Activated CD4-positive, alpha-beta memory T cell treated with anti-CD3 and anti-CD28 coated beads for 36 hours (primary cell): ENCODE measurements at regions of chr16 and their contacts with region 1.

Region 1: DNA sequence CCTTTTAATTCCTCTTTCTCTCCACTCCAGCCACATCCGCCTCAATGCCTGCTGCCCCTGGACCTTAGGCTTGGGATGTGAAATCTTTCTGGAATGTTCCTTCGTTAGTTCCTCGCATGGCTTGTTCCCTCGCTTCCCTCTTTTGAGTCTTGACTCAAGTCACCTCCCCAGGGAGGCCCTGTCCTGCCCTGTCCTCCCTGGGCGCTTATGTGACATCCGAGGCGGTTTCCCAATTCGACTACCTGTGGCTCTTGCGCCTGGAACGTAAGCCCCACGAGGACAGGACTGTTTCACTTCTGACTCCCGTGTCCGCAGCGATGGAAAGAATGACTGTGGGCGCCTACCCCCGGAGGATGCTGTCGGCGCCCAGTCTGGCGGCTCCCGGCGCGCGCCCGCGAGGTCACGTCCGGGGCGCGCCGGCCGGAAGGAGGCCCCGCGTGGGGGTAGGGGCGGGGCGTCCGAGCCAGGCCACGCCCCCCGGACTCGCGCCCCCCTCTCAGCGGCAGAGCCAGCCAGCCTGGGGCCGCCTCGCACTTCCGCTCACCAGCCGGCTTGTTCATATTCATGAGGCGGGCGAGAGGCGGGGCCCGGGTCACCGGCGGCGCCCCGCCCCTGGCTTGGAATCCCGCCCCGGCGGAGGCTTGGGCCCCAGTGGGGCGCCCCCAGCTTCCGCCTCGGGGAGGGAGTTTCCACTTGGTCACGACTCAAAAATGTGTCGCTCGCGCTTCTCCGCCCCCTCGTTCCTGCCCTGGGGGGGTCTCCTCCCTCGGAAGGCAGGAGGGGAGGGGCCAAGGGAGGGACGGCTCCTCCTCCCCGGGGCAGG is 8.4 kb upstream of the GLIS2 start:
- DNase-seq: peak; percentile 97
- H3K4me3 Mint-ChIP-seq: peak overlapping the region; percentile 90
- H3K27ac Mint-ChIP-seq: peak overlapping the region; percentile 90
- H3K4me1 Mint-ChIP-seq: peaks cover 33% of the 10 kb centered on the region
- H3K27me3 Mint-ChIP-seq: no peaks in the 10 kb centered on the region

Region 2: GRCh38 chr16:4183237-4184036 is 124.0 kb before region 1 on chr16:
- CTCF ChIA-PET with region 1: no interaction called
- POLR2A ChIA-PET with region 1: no interaction called
- intact Hi-C with region 1: loop called (anchors 2 kb)
- DNase-seq: peak; percentile 95
- H3K4me3 Mint-ChIP-seq: peak overlapping the region; percentile 76
- H3K27ac Mint-ChIP-seq: peak overlapping the region; percentile 69
- H3K4me1 Mint-ChIP-seq: peaks cover 3% of the 10 kb centered on the region
- H3K27me3 Mint-ChIP-seq: peaks cover 4% of the 10 kb centered on the region

Region 3: DNA sequence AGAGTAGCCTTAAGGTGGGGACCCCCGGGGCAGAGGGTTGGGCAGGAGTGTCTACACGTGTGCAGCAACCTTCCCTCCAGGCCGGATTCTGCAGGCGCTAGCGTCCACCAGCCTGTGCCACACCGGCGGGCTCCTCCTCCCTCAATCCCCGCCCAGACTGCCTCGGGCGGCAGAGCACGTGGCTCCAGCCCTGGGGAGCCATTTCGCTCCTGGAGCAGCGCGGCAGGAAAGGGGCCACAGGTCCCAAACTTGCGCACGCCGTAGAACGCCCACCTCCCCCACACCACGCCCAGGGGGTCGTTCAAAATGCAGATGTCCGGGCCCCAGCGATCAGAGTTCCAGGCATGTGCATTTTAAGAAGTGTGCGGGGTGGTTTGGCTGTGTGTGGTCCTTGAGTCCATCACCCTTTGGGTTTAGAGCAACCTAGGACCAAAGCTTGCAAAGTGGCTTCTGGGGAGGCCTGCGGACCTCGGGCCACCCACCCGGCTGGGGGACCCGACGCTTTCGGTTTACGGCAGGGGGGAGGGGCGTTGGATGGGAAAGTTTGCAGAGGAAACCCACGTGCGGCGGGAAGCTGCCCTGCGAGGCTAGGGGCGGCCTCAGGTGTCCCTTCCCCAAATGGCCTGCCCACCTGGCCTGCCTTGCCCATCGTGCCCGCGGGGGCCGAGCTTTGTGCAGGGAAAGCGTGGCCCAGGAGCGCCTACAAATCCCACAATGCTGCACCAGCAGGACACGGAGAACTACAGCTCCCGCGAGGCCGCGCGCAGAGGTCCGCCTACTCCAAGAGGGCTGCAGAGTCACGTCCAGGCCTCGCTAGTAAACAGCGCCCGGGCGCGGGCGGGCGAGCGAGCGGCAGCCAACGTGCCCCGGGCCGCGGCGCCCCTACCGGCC is 36.0 kb before region 1 on chr16:
- CTCF ChIA-PET with region 1: interaction called, 6 read pairs
- POLR2A ChIA-PET with region 1: interaction called, 3 read pairs
- intact Hi-C with region 1: loop called (anchors 1 kb)
- DNase-seq: peak; percentile 94
- H3K4me3 Mint-ChIP-seq: peak overlapping the region; percentile 86
- H3K27ac Mint-ChIP-seq: peak overlapping the region; percentile 93
- H3K4me1 Mint-ChIP-seq: peaks cover 14% of the 10 kb centered on the region
- H3K27me3 Mint-ChIP-seq: no peaks in the 10 kb centered on the region

Region 4: GRCh38 chr16:4350787-4351659 is 43.6 kb after region 1 on chr16 and contains the start of gene PAM16:
- CTCF ChIA-PET with region 1: interaction called, 4 read pairs
- POLR2A ChIA-PET with region 1: no interaction called
- intact Hi-C with region 1: loop called (anchors 2 kb)
- DNase-seq: peak; percentile 99
- H3K4me3 Mint-ChIP-seq: peak within 1 kb of the TSS; percentile 97
- H3K27ac Mint-ChIP-seq: peak within 1 kb of the TSS; percentile 89
- H3K4me1 Mint-ChIP-seq: peaks cover 29% of the 10 kb centered on the region
- H3K27me3 Mint-ChIP-seq: no peaks in the 10 kb centered on the region
- total RNA-seq, gene PAM16: 52.8 to 63.4 TPM

Region 5: DNA sequence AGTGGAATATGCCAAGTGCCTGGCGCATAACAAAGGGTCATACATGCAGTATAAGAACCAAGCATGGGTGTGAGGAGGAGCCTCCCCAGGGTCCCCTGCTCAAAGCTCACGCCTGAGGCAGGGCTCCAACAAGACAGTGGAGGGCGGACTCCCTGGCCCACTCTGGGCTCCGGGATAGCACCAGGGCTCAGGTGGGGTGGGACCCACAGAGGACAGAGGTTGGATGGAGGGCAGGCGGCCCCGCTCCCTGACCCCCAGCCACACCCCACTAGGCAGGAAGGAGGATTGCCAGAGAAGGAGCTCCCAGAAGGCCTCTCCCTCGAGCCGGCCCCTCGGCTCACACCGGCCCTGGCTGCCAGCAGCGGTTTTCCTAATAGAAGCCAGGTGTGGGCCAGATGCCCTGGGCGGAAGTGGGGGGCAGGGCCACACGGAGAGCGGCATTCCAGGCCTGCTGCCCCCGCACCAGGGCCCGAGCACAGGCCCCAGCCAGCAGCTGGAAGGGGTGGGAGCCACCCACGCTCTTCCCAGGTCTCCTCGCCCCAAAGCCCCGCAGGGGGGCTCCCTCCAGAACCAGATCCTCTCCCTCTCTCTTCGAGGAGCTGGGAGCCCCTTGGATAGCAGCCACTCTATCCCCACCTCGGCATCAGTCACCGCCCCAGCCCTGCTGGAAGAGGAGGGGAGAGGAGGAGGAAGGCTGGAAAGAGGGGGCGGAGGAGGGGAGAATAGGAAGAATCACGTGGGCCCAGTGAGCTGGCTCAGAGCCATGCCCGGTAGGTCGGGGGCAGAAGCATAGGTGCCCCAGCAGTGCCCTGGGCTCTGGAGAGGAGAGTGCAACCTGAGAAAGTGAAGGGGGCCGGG is 85.2 kb after region 1 on chr16:
- CTCF ChIA-PET with region 1: no interaction called
- POLR2A ChIA-PET with region 1: no interaction called
- intact Hi-C with region 1: no loop called
- DNase-seq: no peak
- H3K4me3 Mint-ChIP-seq: no peak overlapping the region
- H3K27ac Mint-ChIP-seq: no peak overlapping the region
- H3K4me1 Mint-ChIP-seq: no peaks in the 10 kb centered on the region
- H3K27me3 Mint-ChIP-seq: no peaks in the 10 kb centered on the region